ENCODE measurements at regions of chr2 and their contacts with region 1.

Region 1: GRCh38 chr2:45343251-45344017 is 267.6 kb downstream of the SRBD1 start:
- DNase-seq: no peak
- ATAC-seq: no peak
- H3K4me3 ChIP-seq: no peak overlapping the region
- H3K27ac ChIP-seq: no peak overlapping the region
- H3K4me1 ChIP-seq: no peaks in the 10 kb centered on the region
- H3K27me3 ChIP-seq: peaks cover 4% of the 10 kb centered on the region
- CTCF ChIP-seq: no peak

Region 2: DNA sequence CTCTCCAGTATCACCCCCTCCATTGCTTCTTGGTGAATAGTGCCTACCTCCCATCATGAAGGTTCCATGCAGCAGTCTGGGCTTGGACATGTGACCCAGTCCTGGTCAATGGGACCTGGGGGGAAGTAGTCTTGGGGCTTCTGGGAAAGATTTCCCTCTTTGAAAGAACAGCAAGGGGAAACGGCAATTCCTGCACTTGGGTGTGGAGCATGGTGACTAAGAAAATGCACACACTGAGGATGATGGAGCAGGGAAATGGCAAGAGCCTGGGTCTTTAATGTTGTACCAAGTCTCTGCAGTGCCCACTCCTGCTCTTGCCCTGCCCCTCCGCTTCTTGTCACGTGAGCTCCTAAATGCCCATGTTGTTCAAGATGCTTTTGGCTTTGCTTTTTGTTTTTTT is 202.8 kb before region 1 on chr2:
- CTCF ChIA-PET with region 1: no interaction called
- POLR2A ChIA-PET with region 1: interaction called, 18 read pairs
- in situ Hi-C with region 1: no loop called
- intact Hi-C with region 1: no loop called
- DNase-seq: no peak
- ATAC-seq: no peak
- H3K4me3 ChIP-seq: no peak overlapping the region
- H3K27ac ChIP-seq: no peak overlapping the region
- H3K4me1 ChIP-seq: no peaks in the 10 kb centered on the region
- H3K27me3 ChIP-seq: no peaks in the 10 kb centered on the region
- CTCF ChIP-seq: no peak

Measured in Panc1 (cell line).